ENCODE measurements at regions of chr15 and their contacts with region 1.

Region 1: DNA sequence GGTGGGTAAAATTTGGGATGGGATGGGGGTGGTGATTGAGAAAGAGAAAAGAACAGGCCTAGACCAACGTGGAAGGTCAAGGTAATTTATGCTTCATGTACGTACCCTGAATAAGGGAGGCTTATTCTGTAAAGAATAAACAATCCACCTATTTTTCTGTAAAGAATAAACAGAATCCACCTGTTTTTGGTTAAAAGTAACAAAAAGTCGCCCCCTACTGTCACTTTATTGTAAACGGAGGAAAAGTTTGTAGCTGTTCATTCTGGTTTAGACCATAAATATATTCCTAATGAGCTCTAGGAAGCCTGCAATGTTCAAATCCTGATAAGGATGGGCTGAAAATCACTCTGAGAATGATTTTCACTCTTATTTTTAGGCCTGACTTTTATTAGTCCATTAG is 23.5 kb upstream of the SQOR start:
- DNase-seq: no peak
- H3K4me3 ChIP-seq: no peak overlapping the region
- H3K27ac ChIP-seq: no peak overlapping the region
- H3K4me1 ChIP-seq: no peaks in the 10 kb centered on the region
- H3K27me3 ChIP-seq: no peaks in the 10 kb centered on the region
- CTCF ChIP-seq: peak; percentile 17 to 52 (median 32)
- POLR2A ChIP-seq: no peak

Region 2: GRCh38 chr15:45429974-45430792 is 181.1 kb before region 1 on chr15:
- intact Hi-C with region 1: loop called in 1 of 2 experiments (anchors 5 kb)
- DNase-seq: peak; percentile 43 to 80 (median 71)
- H3K4me3 ChIP-seq: peak overlapping the region in 1 of 4 donors; percentile 50
- H3K27ac ChIP-seq: no peak overlapping the region
- H3K4me1 ChIP-seq: peaks cover 0 to 7% of the 10 kb centered on the region in 2 donors
- H3K27me3 ChIP-seq: no peaks in the 10 kb centered on the region
- CTCF ChIP-seq: peak; percentile 81 to 99 (median 88)
- POLR2A ChIP-seq: no peak

Region 3: DNA sequence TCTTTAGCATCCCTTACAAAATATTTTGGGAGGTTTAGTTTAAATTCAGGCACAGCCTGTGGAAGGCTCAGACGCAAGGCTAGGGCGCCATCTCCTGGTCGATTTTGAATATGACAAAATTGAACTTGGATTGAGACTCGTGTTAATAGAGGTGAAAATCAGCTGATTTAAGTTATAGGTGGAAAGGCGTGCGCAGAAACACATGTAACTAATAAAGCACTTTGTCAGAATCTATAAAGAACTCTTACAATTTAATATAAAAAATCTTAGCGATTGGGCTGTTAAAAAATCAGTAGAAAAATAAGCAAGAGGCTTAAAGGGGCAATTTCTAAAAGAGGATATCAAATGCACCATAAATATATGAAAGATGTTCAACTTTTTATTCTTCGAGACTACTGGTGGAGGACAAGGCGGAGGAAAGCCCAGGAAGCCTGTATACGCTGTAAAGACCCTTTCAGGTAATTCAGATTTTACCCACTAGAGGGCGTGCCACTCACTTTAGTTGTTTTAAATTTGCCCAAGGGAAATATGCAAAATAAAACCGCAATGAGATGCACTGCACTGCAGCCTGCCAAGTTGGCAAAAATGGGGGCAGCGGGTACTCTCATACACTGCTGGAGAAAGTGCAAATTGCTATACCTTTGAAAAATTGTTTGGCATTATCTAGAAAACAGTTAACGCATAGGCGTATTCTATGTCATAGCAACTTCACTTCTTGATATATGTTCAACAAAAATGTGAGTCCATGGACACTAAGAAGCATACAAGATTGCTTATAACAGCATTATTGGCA is 153.5 kb before region 1 on chr15:
- intact Hi-C with region 1: loop called (anchors 2 to 5 kb)
- DNase-seq: peak; percentile 69 to 92 (median 86)
- H3K4me3 ChIP-seq: peak overlapping the region in 3 of 4 donors; percentile 5 to 43 (median 15)
- H3K27ac ChIP-seq: peak overlapping the region in 4 of 5 donors; percentile 1 to 84 (median 60)
- H3K4me1 ChIP-seq: peaks cover 3 to 10% of the 10 kb centered on the region in 2 donors
- H3K27me3 ChIP-seq: no peaks in the 10 kb centered on the region
- CTCF ChIP-seq: peak; percentile 66 to 89 (median 80)
- POLR2A ChIP-seq: no peak

Region 4: GRCh38 chr15:45522328-45523160 is 88.8 kb before region 1 on chr15 and contains the start of gene SLC30A4:
- intact Hi-C with region 1: loop called in 1 of 2 experiments (anchors 5 kb)
- DNase-seq: peak; percentile 63 to 76 (median 67)
- H3K4me3 ChIP-seq: peak within 1 kb of the TSS in 3 of 4 donors; percentile 71 to 96 (median 71)
- H3K27ac ChIP-seq: peak within 1 kb of the TSS; percentile 35 to 92 (median 77)
- H3K4me1 ChIP-seq: peaks cover 0 to 36% of the 10 kb centered on the region in 2 donors
- H3K27me3 ChIP-seq: no peaks in the 10 kb centered on the region
- CTCF ChIP-seq: peak in 4 of 6 experiments; percentile 23 to 47 (median 32)
- POLR2A ChIP-seq: peak; percentile 18 to 70
- total RNA-seq, gene SLC30A4: 4.7 to 10.6 (median 6.9) TPM

Region 5: GRCh38 chr15:45829336-45830153 is 218.2 kb after region 1 on chr15:
- intact Hi-C with region 1: no loop called
- DNase-seq: no peak
- H3K4me3 ChIP-seq: no peak overlapping the region
- H3K27ac ChIP-seq: no peak overlapping the region
- H3K4me1 ChIP-seq: no peaks in the 10 kb centered on the region
- H3K27me3 ChIP-seq: no peaks in the 10 kb centered on the region
- CTCF ChIP-seq: no peak
- POLR2A ChIP-seq: no peak